ENCODE measurements at regions of chr16 and their contacts with region 1.

Region 1: GRCh38 chr16:30602616-30603277 is 7.4 kb downstream of the ZNF689 start:
- DNase-seq: no peak
- CTCF ChIP-seq: no peak

Region 2: GRCh38 chr16:30585400-30586189 is 17.2 kb before region 1 on chr16 and contains the start of gene ZNF785:
- CTCF ChIA-PET with region 1: interaction called, 57 read pairs
- POLR2A ChIA-PET with region 1: no interaction called
- DNase-seq: peak; percentile 98
- CTCF ChIP-seq: peak; percentile 35

Region 3: DNA sequence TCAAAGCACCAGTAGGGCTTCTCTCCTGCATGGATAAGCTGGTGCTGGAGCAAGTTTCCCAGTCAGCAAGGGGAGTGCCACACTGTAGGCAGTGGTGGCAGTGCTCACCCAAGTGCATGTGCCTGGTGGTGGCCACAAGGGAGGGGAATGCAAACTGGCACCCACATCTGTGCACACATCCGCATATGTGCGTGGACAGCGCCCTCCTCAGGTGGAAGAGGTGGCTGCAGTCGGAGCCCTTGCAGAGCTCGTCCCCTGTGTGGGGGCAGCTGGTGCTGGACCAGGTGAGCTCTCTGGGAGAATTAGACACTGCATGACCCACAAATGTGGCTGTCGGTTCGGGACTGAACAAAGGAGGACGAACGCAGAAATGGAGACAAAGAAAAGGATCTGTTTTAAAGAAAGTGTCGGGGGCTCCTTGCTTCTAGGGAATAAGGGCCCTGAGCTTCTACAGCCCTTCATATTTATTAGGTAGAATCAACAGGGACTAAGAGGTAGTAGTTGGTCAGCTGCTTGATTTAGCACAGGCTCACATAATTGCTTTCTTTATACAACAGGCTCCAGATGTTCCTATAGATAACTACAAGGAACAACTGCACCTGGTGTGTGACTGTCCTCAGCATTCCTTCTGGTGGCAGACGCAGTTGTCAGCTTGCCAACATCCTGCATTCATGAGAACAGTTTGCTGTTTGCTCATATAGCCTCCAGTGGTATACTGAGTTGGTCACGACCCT is 12.8 kb after region 1 on chr16:
- CTCF ChIA-PET with region 1: interaction called, 58 read pairs
- POLR2A ChIA-PET with region 1: no interaction called
- DNase-seq: peak; percentile 50
- CTCF ChIP-seq: peak; percentile 74

Region 4: GRCh38 chr16:30700491-30700890 is 97.7 kb after region 1 on chr16:
- CTCF ChIA-PET with region 1: no interaction called
- POLR2A ChIA-PET with region 1: no interaction called
- DNase-seq: no peak
- CTCF ChIP-seq: no peak

Region 5: DNA sequence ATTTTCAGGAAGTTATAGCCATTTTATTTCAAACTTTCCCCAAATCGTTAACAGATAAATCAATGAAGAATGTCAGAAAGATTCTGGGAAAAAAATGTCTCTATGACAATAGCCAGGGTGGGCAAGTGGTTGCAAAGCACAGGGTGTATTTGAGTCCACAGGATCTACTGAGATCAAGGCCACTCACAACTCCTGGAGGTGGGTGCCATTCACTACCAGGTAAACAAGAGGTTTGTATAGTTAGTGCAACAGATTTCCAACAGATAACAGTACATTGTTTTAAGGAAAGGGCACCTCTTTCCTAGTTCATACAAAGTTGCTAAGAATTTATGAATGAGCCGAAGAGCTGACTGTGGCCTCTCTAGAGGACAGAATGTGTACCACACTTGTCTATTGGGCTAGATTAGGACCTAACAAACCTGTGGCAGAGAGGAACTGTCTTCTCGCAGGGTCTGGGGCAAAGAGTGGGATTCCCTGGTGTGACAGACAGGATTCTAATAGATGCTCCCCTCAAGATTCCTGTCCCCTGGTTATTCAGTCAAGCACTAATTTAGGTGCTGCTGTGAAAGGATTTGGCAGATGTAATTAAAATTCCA is 236.2 kb after region 1 on chr16:
- CTCF ChIA-PET with region 1: no interaction called
- POLR2A ChIA-PET with region 1: no interaction called
- DNase-seq: no peak
- CTCF ChIP-seq: no peak